SK-N-SH (cell line): ENCODE measurements at regions of chr22 and their contacts with region 1.

Region 1: GRCh38 chr22:35430897-35431322 is 31.0 kb downstream of the MCM5 start:
- DNase-seq: peak; percentile 95
- H3K4me3 ChIP-seq: no peak overlapping the region; a peak in 1 of 4 replicates
- H3K27ac ChIP-seq: peak overlapping the region; percentile 67 to 69
- H3K4me1 ChIP-seq: peaks cover 0 to 9% of the 10 kb centered on the region in 2 experiments; a peak in 1 of 4 replicates
- H3K27me3 ChIP-seq: no peaks in the 10 kb centered on the region
- CTCF ChIP-seq: peak; percentile 98
- EP300 ChIP-seq: peak in 1 of 2 experiments; percentile 35; a peak in 2 of 4 replicates
- RAD21 ChIP-seq: peak; percentile 99

Region 2: GRCh38 chr22:35150183-35151107 is 280.5 kb before region 1 on chr22:
- CTCF ChIA-PET with region 1: no interaction called
- POLR2A ChIA-PET with region 1: no interaction called
- DNase-seq: peak; percentile 61
- H3K4me3 ChIP-seq: peak overlapping the region in 1 of 2 experiments; percentile 14; a peak in 1 of 4 replicates
- H3K27ac ChIP-seq: no peak overlapping the region
- H3K4me1 ChIP-seq: no peaks in the 10 kb centered on the region; a peak in 1 of 4 replicates
- H3K27me3 ChIP-seq: peaks cover 5% of the 10 kb centered on the region; the same call in 1 of the 2 replicates
- CTCF ChIP-seq: peak; percentile 80
- EP300 ChIP-seq: no peak
- RAD21 ChIP-seq: peak; percentile 64

Region 3: GRCh38 chr22:35403356-35403755 is 27.6 kb before region 1 on chr22:
- CTCF ChIA-PET with region 1: interaction called, 22 read pairs
- POLR2A ChIA-PET with region 1: no interaction called
- DNase-seq: no peak
- H3K4me3 ChIP-seq: no peak overlapping the region
- H3K27ac ChIP-seq: no peak overlapping the region
- H3K4me1 ChIP-seq: no peaks in the 10 kb centered on the region; a peak in 2 of 4 replicates
- H3K27me3 ChIP-seq: no peaks in the 10 kb centered on the region
- CTCF ChIP-seq: no peak
- EP300 ChIP-seq: no peak
- RAD21 ChIP-seq: no peak

Region 4: GRCh38 chr22:35446365-35446764 is 15.5 kb after region 1 on chr22:
- CTCF ChIA-PET with region 1: interaction called, 13 read pairs
- POLR2A ChIA-PET with region 1: no interaction called
- DNase-seq: no peak
- H3K4me3 ChIP-seq: no peak overlapping the region
- H3K27ac ChIP-seq: peak overlapping the region in 1 of 2 experiments; percentile 76; a peak in 2 of 4 replicates
- H3K4me1 ChIP-seq: peaks cover 2 to 16% of the 10 kb centered on the region in 2 experiments; a peak in 3 of 4 replicates
- H3K27me3 ChIP-seq: no peaks in the 10 kb centered on the region
- CTCF ChIP-seq: no peak
- EP300 ChIP-seq: peak in 1 of 2 experiments; percentile 45; a peak in 1 of 4 replicates
- RAD21 ChIP-seq: no peak

Region 5: DNA sequence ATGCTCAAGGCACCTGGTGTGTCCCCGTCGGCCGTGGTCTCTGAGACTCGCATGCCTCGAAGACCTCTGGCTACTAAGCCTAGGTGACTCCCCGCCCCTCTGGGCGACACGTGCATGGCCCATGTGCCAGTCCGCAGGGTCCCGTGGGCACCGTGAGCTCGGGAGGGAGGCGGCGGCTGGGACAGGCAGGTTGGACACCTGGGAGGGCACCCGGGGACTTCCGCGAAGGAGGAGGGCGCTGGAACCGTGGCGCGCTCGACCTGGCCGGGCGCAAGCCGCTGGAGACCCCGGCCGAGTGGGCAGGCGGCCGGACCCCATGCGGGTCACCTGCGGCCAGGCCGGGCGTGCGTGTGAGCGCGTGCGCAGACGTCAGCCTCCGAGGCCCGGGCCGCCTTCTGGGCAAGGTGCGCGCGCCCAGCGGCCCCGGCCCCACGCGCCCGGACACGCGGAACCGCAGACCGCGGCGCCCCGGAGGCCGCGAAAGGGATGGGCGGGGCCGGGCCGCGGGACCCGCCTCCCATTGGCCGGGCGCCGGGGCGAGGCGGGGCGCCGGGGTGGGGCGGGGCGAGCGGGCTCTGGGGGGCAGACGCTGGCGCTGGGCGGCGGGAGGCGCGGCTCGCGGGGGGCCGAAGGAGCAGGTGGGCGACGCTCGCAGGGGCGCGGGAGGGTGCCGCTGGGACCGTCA is 109.1 kb after region 1 on chr22:
- CTCF ChIA-PET with region 1: interaction called, 13 read pairs
- POLR2A ChIA-PET with region 1: no interaction called
- DNase-seq: peak; percentile 98
- H3K4me3 ChIP-seq: peak overlapping the region; percentile 58 to 68
- H3K27ac ChIP-seq: no peak overlapping the region; a peak in 1 of 4 replicates
- H3K4me1 ChIP-seq: peaks cover 11 to 13% of the 10 kb centered on the region in 2 experiments; a peak in 2 of 4 replicates
- H3K27me3 ChIP-seq: no peaks in the 10 kb centered on the region
- CTCF ChIP-seq: no peak
- EP300 ChIP-seq: no peak
- RAD21 ChIP-seq: no peak

Region 6: GRCh38 chr22:35568751-35569725 is 138.1 kb after region 1 on chr22:
- CTCF ChIA-PET with region 1: interaction called, 11 read pairs
- POLR2A ChIA-PET with region 1: no interaction called
- DNase-seq: no peak
- H3K4me3 ChIP-seq: no peak overlapping the region
- H3K27ac ChIP-seq: peak overlapping the region in 1 of 2 experiments; percentile 52; a peak in 2 of 4 replicates
- H3K4me1 ChIP-seq: peaks cover 9 to 25% of the 10 kb centered on the region in 2 experiments; a peak in 3 of 4 replicates
- H3K27me3 ChIP-seq: no peaks in the 10 kb centered on the region
- CTCF ChIP-seq: no peak
- EP300 ChIP-seq: no peak
- RAD21 ChIP-seq: no peak

Region 7: GRCh38 chr22:35582861-35583670 is 152.2 kb after region 1 on chr22:
- CTCF ChIA-PET with region 1: interaction called, 161 read pairs
- POLR2A ChIA-PET with region 1: interaction called, 4 read pairs
- DNase-seq: peak; percentile 88
- H3K4me3 ChIP-seq: no peak overlapping the region; a peak in 1 of 4 replicates
- H3K27ac ChIP-seq: no peak overlapping the region
- H3K4me1 ChIP-seq: peaks cover 0 to 23% of the 10 kb centered on the region in 2 experiments; a peak in 1 of 4 replicates
- H3K27me3 ChIP-seq: no peaks in the 10 kb centered on the region
- CTCF ChIP-seq: peak; percentile 94
- EP300 ChIP-seq: no peak
- RAD21 ChIP-seq: peak; percentile 95

Region 8: DNA sequence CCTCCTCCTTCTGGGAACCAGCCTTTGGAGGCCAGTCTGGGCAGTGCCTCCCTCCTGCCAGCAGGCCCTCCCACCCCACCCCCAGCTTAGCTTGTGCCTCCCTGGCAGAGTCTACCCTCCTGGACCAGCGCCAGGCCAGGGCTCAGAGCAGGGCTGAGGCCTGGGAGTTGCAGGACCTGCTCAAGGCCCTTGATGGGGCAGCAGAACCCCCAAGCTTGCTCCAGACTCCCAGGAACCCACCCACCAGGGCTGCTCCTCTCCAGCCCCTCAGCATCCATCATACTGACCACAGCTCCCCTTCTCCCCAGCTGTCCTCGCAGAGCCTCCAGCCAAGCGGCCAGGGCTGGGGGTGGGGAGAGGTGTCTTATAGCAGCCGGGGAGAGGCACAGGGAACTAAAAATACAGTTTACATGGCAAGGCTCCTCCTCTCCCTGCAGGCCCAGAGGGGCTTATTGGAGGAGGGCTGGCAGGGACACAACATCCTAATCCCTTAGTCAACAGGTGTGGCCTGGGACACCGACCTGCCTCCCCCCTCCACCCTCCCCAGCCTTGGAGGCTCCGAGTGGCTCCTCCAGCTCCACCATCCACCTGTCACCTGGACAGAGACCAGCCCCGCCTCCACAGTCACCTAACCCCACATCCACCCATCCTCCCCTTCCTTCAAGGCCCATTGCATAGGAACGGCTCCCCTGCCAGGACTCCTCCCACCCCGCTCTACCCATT is 191.4 kb after region 1 on chr22:
- CTCF ChIA-PET with region 1: interaction called, 40 read pairs
- POLR2A ChIA-PET with region 1: no interaction called
- DNase-seq: peak; percentile 67
- H3K4me3 ChIP-seq: no peak overlapping the region
- H3K27ac ChIP-seq: peak overlapping the region in 1 of 2 experiments; percentile 81; a peak in 2 of 4 replicates
- H3K4me1 ChIP-seq: peaks cover 0 to 41% of the 10 kb centered on the region in 2 experiments; a peak in 2 of 4 replicates
- H3K27me3 ChIP-seq: no peaks in the 10 kb centered on the region
- CTCF ChIP-seq: no peak
- EP300 ChIP-seq: no peak
- RAD21 ChIP-seq: no peak